Psoas muscle (tissue), 8 donors: ENCODE measurements at regions of chr15 and their contacts with region 1.

Region 1: GRCh38 chr15:95590533-95591044 is 739.9 kb upstream of the NR2F2 start:
- DNase-seq: no peak
- ATAC-seq: no peak
- H3K4me3 ChIP-seq: no peak overlapping the region
- H3K27ac ChIP-seq: no peak overlapping the region
- H3K4me1 ChIP-seq: no peaks in the 10 kb centered on the region
- H3K27me3 ChIP-seq: no peaks in the 10 kb centered on the region
- CTCF ChIP-seq: no peak

Region 2: DNA sequence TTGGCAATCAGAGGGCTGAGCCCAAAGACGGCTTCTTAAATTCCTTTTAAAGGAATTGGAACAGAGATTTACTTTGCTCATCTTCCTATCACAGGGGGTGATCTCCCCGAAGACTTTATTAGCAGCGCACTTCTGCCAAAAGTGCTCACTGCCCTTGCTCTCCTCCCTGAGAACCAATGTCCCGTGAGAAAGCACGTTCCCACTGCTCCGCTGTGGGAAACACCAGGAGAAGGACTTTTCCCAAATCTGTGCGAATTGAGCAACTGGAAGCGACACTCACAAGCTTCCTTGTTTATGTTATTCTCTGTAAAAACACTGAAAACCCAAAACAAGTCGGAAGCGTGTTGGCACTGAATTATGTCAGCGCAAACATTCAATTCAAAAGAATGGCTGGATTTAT is 69.1 kb after region 1 on chr15:
- intact Hi-C with region 1: loop called in 1 of 2 experiments (anchors 10 kb)
- DNase-seq: no peak
- ATAC-seq: no peak
- H3K4me3 ChIP-seq: no peak overlapping the region
- H3K27ac ChIP-seq: no peak overlapping the region
- H3K4me1 ChIP-seq: no peaks in the 10 kb centered on the region
- H3K27me3 ChIP-seq: peaks cover 0 to 5% (median 0%) of the 10 kb centered on the region in 3 donors
- CTCF ChIP-seq: no peak